ENCODE measurements at regions of chr1 and their contacts with region 1.

Region 1: DNA sequence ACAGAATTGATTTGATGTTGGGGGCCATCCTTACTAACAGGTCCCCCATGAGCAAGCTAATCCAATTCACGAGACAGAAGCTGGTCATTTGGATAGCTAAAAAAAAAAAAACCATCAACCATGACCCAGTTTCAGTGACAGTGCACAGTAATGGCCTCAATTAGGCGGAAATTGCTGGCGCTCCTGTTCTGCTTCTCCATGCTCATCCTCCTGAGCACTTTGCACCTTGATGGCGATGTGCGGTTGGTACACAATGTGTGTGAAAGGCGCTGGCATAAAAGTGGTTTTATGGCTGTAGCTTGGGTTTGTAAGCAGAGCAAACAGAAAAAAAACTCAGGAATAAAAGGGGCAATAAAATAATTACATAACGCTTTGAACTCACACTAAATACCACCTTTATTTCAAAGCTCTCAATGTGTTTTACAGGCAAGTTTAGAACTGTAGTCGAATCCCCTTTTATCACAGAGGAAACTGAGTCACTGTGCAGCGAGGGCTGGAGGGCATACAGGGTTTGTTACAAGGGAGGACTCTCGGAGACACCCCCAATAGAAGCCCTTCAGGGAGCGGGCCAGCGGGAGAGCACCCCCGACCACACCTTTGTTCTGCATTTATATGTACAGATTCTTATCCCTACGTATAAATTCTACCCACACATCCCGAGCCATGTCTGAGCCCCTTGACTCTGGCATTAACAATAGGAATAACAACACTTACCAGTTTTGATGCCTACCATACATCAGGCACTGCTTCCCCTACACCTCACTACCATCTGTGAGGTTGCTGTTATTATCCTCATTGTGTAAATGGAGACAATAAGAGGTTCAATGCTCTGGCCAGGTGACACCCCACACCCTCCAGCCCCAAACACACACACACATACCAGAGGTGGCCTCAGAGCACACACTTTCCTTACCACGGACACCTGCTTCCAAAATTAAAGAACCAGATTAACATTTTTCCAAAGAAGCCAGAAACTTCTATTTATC is 213.5 kb upstream of the IRF2BP2 start:
- DNase-seq: no peak
- H3K4me3 ChIP-seq: no peak overlapping the region
- H3K27ac ChIP-seq: no peak overlapping the region
- H3K4me1 ChIP-seq: no peaks in the 10 kb centered on the region
- H3K27me3 ChIP-seq: no peaks in the 10 kb centered on the region
- CTCF ChIP-seq: no peak

Region 2: GRCh38 chr1:234899041-234899729 is 75.7 kb after region 1 on chr1:
- CTCF ChIA-PET with region 1: no interaction called
- dilution Hi-C with region 1: no loop called
- in situ Hi-C with region 1: no loop called
- intact Hi-C with region 1: no loop called
- DNase-seq: no peak
- H3K4me3 ChIP-seq: no peak overlapping the region
- H3K27ac ChIP-seq: no peak overlapping the region
- H3K4me1 ChIP-seq: peaks cover 4% of the 10 kb centered on the region
- H3K27me3 ChIP-seq: no peaks in the 10 kb centered on the region
- CTCF ChIP-seq: no peak

Region 3: GRCh38 chr1:234912548-234913277 is 89.2 kb after region 1 on chr1:
- CTCF ChIA-PET with region 1: no interaction called
- dilution Hi-C with region 1: no loop called
- in situ Hi-C with region 1: no loop called
- intact Hi-C with region 1: loop called (anchors 5 kb)
- DNase-seq: no peak
- H3K4me3 ChIP-seq: no peak overlapping the region
- H3K27ac ChIP-seq: no peak overlapping the region
- H3K4me1 ChIP-seq: no peaks in the 10 kb centered on the region
- H3K27me3 ChIP-seq: no peaks in the 10 kb centered on the region
- CTCF ChIP-seq: no peak